Activated CD4-positive, alpha-beta memory T cell treated with anti-CD3 and anti-CD28 coated beads for 36 hours (primary cell): ENCODE measurements at regions of chr6 and their contacts with region 1.

Region 1: GRCh38 chr6:146857180-146857979 is 258.6 kb downstream of the ADGB start:
- DNase-seq: peak; percentile 83
- H3K4me3 Mint-ChIP-seq: peak overlapping the region; percentile 59
- H3K27ac Mint-ChIP-seq: peak overlapping the region; percentile 73
- H3K4me1 Mint-ChIP-seq: peaks cover 32% of the 10 kb centered on the region
- H3K27me3 Mint-ChIP-seq: peaks cover 4% of the 10 kb centered on the region

Region 2: DNA sequence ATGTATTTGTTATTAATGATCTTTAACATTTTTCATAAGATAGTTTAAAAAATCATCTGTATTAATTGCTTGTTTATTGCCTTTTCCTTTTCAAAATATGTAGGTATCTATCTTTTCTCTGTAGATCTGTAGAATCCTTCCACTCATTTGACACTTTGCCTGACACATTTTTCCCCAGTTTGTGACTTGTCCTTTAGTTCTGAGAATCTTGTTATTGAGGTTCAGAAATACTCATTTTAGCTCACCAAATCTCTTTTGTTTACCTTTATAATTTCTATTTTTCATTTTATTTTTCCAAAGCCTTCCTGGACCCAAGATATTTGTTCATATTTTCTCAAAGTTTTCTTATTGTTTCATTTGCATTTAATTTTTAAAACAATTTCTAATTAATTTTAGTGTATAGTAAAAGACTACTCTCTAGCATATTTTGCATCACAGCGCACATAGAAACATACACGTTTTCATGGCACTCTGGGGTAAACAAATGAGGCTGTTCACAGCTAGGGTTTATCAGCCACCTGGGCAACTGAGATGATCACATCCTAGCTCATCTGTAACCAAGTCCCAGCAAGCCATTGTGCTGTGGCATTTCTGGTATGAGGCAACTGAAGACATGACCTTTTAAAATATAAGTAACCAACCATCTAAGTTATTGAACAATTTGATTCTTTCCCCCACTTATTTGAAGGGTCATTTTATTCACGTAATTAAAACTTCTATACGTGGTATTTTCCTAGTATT is 17.1 kb after region 1 on chr6:
- CTCF ChIA-PET with region 1: interaction called, 3 read pairs
- POLR2A ChIA-PET with region 1: no interaction called
- intact Hi-C with region 1: loop called (anchors 2 kb)
- DNase-seq: no peak
- H3K4me3 Mint-ChIP-seq: no peak overlapping the region
- H3K27ac Mint-ChIP-seq: no peak overlapping the region
- H3K4me1 Mint-ChIP-seq: peaks cover 16% of the 10 kb centered on the region
- H3K27me3 Mint-ChIP-seq: no peaks in the 10 kb centered on the region

Region 3: DNA sequence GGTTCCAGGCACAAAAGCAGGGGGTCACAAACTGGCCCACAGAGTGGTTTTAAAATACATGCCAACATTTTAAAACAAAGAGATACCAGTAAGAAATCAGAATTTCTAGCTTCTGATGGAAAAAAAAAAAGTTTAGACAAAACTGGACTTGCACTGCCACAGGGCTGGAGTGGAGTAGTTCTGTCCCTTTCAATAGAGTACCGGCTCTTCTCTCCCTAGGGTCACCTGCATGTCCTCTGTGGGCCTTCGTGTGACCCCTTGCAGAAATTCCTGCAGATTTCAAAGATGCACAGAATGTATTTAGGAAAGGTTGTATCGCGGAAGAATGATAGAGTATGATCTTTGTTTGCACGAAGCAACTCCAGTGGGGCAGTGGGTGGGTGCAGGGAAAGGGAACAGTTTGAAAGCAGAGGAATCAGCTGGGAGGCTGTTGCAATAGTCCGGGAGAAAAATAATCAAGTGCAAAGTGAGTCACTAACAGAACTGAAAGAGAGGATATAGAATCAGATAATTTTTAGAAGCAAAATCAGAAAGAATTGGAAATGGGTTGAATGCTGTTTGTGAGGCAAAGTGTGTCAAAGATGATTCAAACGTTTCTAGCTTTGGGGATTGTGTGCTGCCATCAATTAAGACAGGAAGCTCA is 249.5 kb after region 1 on chr6:
- CTCF ChIA-PET with region 1: no interaction called
- POLR2A ChIA-PET with region 1: no interaction called
- intact Hi-C with region 1: loop called (anchors 10 kb)
- DNase-seq: no peak
- H3K4me3 Mint-ChIP-seq: no peak overlapping the region
- H3K27ac Mint-ChIP-seq: no peak overlapping the region
- H3K4me1 Mint-ChIP-seq: peaks cover 38% of the 10 kb centered on the region
- H3K27me3 Mint-ChIP-seq: no peaks in the 10 kb centered on the region

Region 4: DNA sequence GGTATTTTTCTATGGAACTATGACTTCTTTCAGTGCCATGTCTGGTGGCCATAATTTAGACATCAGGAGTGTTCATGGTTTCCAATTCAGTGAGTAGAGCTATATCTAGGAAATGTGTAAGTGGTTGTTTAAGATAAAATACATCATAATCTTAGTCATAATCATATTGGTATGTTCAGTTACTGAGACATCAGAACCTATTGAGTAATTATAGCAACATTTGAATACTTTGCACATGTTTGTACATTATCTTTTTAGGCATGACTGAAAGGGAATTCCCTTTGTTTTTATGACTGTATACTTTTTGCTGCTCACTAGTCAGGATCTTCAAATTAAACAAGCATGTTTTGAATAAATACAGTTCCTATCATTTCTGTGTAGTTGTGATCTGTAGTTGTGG is 410.9 kb after region 1 on chr6:
- CTCF ChIA-PET with region 1: no interaction called
- POLR2A ChIA-PET with region 1: no interaction called
- intact Hi-C with region 1: loop called (anchors 1 kb)
- DNase-seq: no peak
- H3K4me3 Mint-ChIP-seq: no peak overlapping the region
- H3K27ac Mint-ChIP-seq: peak overlapping the region; percentile 70
- H3K4me1 Mint-ChIP-seq: peaks cover 18% of the 10 kb centered on the region
- H3K27me3 Mint-ChIP-seq: no peaks in the 10 kb centered on the region

Region 5: GRCh38 chr6:147285087-147285855 is 427.9 kb after region 1 on chr6:
- CTCF ChIA-PET with region 1: interaction called, 5 read pairs
- POLR2A ChIA-PET with region 1: no interaction called
- intact Hi-C with region 1: loop called (anchors 1 kb)
- DNase-seq: no peak
- H3K4me3 Mint-ChIP-seq: no peak overlapping the region
- H3K27ac Mint-ChIP-seq: no peak overlapping the region
- H3K4me1 Mint-ChIP-seq: peaks cover 36% of the 10 kb centered on the region
- H3K27me3 Mint-ChIP-seq: no peaks in the 10 kb centered on the region

Region 6: DNA sequence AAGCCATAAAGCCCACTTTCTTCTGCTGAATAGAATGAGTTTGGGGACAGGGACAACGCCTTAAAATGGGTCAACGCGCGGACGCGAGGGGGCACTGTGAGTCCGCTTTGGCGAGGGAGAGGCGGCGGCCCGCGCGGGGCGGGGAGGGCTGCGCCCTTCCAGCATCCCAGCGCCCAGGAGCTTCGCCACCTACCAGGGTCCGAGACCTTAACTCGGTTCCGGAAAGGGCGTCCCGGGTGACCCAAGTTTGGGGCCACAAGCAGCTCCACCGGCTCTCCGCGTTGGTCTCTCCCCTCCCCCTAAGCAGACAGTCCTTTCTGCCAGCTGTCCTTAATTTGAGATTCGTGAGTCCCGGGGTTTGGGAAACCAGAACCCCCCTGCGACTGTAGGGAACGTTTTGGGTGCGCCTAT is 649.3 kb after region 1 on chr6:
- CTCF ChIA-PET with region 1: no interaction called
- POLR2A ChIA-PET with region 1: no interaction called
- intact Hi-C with region 1: loop called (anchors 5 kb)
- DNase-seq: peak; percentile 71
- H3K4me3 Mint-ChIP-seq: no peak overlapping the region
- H3K27ac Mint-ChIP-seq: no peak overlapping the region
- H3K4me1 Mint-ChIP-seq: peaks cover 17% of the 10 kb centered on the region
- H3K27me3 Mint-ChIP-seq: peaks cover 55% of the 10 kb centered on the region